CD4-positive, alpha-beta memory T cell (primary cell): ENCODE measurements at regions of chr5 and their contacts with region 1.

Region 1: DNA sequence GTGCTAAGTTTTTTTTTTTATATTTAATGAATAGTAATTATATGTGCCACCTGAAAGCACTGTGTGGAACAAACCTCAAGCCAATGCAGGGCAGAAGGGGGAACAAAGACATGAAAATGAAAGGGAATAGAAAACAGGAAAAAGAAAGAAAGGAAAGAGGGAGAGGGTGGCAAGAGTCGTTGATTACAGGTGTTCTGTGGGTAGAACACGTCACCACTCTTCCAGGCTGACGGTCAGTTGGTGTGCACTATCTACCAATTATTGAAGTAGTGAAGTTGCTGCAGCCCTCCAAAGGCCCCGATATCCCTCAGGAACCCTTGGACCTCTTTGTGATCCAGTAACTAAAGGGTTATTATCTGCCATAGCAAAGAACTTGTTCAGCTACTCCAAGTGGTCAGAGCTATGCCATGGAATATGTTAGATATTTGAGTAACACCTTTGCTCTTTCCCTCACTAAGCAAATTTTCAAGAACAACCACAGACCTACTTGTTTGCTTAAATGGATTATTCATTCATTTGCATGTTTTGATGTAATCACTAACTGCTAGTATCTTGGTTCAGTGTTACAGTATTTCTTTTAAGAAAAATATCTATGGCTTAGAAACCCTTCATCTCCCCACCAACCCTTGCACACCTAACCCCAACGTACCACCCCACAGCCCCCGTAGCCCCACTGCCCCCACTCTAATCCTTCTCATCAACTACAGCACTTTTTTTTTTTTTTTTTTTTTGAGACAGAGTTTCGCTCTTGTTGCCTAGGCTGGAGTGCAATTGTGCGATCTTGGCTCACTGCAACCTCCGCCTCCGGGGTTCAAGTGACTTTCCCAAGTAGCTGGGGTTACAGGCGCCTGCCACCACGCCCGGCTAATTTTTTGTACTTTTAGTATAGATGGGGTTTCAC is 31.3 kb downstream of the FYB1 start:
- DNase-seq: peak in 2 of 5 donors; percentile 58 to 70
- H3K4me3 ChIP-seq: peak overlapping the region in 1 of 2 donors; percentile 9
- H3K4me3 Mint-ChIP-seq: peak overlapping the region; percentile 84 to 96 (median 90)
- H3K27ac ChIP-seq: peak overlapping the region; percentile 59
- H3K27ac Mint-ChIP-seq: peak overlapping the region; percentile 95 to 99 (median 99)
- H3K4me1 ChIP-seq: peaks cover 98% of the 10 kb centered on the region
- H3K4me1 Mint-ChIP-seq: peaks cover 71 to 96% (median 83%) of the 10 kb centered on the region in 4 donors
- H3K27me3 ChIP-seq: no peaks in the 10 kb centered on the region
- H3K27me3 Mint-ChIP-seq: no peaks in the 10 kb centered on the region

Region 2: DNA sequence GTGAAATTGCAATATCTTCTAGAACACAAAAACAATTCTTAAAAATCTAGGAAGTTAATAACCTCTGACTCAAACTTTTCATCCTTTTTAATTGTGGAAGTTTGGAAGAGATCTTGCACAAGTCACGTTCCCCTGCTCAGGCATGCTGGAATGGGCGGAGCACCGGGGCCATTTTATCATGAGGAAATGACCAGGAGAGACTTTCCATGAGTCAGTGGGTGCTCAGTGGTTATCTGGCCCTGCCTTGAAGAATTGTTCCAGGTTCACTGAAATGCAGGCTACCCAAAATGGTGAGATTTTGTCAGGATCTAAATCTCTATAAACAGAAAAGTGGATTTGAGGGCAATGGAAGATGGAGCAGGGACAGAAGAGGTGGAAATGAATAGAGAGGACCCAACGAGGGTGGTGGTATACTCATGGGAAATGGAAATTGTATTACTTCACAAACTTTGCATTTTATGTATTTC is 29.9 kb before region 1 on chr5:
- CTCF ChIA-PET with region 1: interaction called, 11 read pairs
- POLR2A ChIA-PET with region 1: interaction called, 1,810 read pairs
- intact Hi-C with region 1: no loop called
- DNase-seq: peak in 1 of 5 donors; percentile 58
- H3K4me3 ChIP-seq: peak overlapping the region in 1 of 2 donors; percentile 7
- H3K4me3 Mint-ChIP-seq: peak overlapping the region in 7 of 8 donors; percentile 55 to 83 (median 71)
- H3K27ac ChIP-seq: peak overlapping the region; percentile 30
- H3K27ac Mint-ChIP-seq: peak overlapping the region; percentile 78 to 94 (median 89)
- H3K4me1 ChIP-seq: peaks cover 100% of the 10 kb centered on the region
- H3K4me1 Mint-ChIP-seq: peaks cover 63 to 88% (median 74%) of the 10 kb centered on the region in 4 donors
- H3K27me3 ChIP-seq: no peaks in the 10 kb centered on the region
- H3K27me3 Mint-ChIP-seq: no peaks in the 10 kb centered on the region

Region 3: GRCh38 chr5:39238366-39239105 is 50.5 kb after region 1 on chr5:
- CTCF ChIA-PET with region 1: no interaction called
- POLR2A ChIA-PET with region 1: no interaction called
- intact Hi-C with region 1: no loop called
- DNase-seq: no peak
- H3K4me3 ChIP-seq: no peak overlapping the region
- H3K4me3 Mint-ChIP-seq: no peak overlapping the region
- H3K27ac ChIP-seq: no peak overlapping the region
- H3K27ac Mint-ChIP-seq: peak overlapping the region in 2 of 7 donors; percentile 8 to 37
- H3K4me1 ChIP-seq: no peaks in the 10 kb centered on the region
- H3K4me1 Mint-ChIP-seq: peaks cover 6 to 12% (median 9%) of the 10 kb centered on the region in 4 donors
- H3K27me3 ChIP-seq: no peaks in the 10 kb centered on the region
- H3K27me3 Mint-ChIP-seq: no peaks in the 10 kb centered on the region